Head of caudate nucleus (tissue), 42 donors: ENCODE measurements at regions of chr4 and their contacts with region 1.

Region 1: GRCh38 chr4:128809477-128810330 is at the start of gene JADE1:
- DNase-seq: peak; percentile 82 to 96 (median 91)

Region 2: DNA sequence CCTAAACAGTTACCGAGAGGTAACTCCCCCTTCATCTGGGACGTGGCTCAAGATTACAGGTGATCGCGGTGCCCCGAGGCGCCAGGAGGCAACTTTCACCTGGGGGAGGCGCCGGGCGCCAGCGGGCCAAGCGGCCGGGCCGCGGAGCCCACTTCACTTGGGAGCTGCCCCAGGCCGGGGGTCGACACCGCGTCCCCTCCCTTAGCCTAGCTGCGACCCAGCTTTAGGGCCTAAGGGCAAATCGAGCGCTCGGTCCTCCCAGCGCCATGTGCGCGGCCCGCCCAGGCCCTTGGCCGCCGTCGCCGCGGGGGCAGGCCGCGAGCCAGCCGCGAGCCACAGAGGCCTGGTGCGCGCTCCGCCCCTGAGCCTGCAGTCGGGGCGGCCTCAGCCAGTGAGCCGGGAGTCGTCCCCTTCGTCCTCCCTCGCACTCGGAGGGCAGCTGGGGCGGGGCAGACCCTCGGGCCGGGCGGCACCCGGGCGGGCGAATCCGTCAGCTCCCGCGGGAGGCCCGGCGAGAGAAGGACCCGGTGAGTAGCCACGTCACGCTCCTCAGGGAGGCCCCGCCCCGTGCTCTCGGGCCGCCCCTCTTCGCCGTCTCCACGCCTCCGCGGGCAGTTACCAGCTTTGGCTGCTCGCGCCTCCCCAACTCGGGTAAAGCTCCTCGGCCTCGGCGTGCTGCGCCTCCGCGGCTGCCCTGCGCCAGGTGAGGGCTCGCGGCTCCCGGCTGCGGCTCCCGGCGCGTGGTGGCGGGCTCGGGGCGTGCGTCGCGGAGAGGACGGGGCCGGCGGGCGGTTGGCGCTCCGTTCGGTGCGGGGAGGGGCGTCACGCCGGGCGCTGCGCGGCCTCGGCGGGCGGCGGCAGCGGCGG is 748.8 kb before region 1 on chr4 and contains the start of gene LARP1B:
- intact Hi-C with region 1: loop called (anchors 10 kb)
- DNase-seq: peak; percentile 81 to 98 (median 94)

Region 3: DNA sequence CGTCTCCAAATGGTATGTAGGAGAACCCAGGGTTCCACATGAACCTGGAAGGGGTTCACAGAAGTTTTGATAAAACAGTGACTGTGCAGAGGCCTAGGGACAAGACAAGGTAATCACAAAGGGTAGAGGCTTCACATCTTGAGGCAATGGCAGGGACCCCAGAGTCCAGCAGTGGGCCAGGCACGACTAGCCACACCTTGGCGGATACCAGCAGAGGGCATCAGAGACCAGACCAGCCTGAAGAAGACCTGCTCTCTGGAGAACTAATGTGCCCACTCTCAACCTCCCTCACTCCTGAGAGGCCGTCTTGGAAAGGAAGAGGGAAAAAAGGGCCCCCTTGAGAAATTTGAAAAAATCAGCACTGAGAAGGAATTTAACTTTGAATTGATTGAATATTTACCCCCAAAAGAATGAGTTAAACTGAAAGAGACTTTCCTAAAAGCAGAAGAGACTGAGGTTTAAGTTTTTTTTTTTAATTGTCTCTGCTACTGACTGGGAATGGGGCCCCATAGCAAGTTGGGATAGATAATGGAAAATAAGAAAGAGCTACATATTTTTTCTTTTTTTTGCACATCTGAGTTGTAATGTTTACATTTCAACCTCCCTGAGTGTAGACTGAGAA is 244.0 kb before region 1 on chr4:
- intact Hi-C with region 1: loop called (anchors 10 kb)
- DNase-seq: peak in 40 of 42 donors; percentile 7 to 69 (median 38)

Region 4: DNA sequence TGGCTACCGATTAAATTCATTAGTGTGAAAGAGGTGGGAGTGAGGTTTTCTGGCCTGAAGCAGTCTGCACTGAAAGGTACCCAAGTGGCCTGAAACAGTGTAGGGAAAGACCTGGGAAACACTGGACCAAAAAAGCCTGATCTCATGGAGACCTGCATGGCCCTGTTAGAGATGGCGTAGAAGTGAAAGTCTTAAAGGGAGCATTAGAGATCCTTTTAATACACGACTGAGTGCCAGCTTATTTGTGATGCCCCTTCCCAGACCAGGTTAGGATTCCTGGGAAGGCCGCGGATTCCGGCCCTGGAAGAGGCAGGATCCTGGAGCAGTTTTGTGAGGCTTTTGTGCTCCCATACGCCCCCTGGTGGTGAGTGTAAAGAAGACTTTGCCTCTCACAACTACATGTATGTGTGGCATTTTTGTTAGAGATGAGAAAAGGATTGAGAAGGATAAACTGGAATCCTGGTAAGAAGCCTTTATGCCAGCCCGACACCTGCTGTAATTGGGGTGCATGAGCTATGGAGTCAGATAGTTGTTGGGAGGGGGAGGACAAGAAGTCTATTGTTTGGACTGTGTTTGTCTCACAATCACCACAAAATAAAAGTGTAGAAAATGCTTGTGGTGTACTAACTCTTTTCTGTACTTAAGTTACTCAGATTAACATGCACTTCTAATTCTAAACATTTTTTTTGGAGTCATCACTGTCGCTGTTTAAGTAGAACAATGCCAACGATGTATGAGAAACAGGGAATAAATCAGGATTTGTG is 53.8 kb after region 1 on chr4:
- intact Hi-C with region 1: loop called (anchors 5 kb)
- DNase-seq: peak; percentile 65 to 94 (median 86)